GM23248 (cell line): ENCODE measurements at regions of chr1 and their contacts with region 1.

Region 1: DNA sequence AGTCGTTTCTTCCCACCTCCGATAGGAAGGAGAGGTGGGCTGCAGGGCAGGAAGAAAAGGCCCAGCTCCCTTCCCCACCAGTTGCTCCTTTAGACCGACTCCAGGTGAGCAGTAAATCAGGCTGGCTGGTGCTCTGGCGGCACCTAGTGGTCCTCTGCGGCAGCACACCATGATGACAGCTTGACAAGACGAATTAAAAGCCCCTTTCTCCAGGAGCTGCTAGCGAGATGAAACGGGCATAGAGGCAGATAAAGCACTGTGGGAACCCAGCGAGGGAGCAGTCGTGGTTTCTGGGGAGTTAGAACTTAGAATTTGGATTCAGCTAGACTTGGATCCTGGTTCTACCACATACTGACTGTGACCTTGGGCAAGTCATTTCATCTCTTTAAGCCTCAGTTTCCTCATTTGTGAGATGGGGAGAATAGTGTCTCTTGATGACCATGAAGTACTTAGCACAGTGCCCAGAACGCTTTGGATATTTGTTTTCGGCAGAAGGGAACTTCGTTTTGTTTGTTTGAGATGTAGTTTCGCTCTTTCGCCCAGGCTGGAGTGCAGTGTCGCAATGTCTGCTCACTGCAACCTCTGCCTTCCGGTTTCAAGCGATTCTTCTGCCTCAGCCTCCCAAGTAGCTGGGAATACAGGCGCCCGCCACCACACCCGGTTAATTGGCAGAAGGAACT is 21.8 kb upstream of the COL9A2 start:
- DNase-seq: peak; percentile 73
- H3K4me3 ChIP-seq: no peak overlapping the region
- H3K27ac ChIP-seq: no peak overlapping the region
- H3K4me1 ChIP-seq: no peaks in the 10 kb centered on the region
- H3K27me3 ChIP-seq: no peaks in the 10 kb centered on the region

Region 2: GRCh38 chr1:40079774-40080400 is 259.0 kb before region 1 on chr1:
- in situ Hi-C with region 1: loop called (anchors 10 kb)
- DNase-seq: no peak
- H3K4me3 ChIP-seq: no peak overlapping the region
- H3K27ac ChIP-seq: no peak overlapping the region
- H3K4me1 ChIP-seq: peaks cover 27% of the 10 kb centered on the region
- H3K27me3 ChIP-seq: no peaks in the 10 kb centered on the region

Region 3: GRCh38 chr1:40143891-40144575 is 194.9 kb before region 1 on chr1:
- in situ Hi-C with region 1: loop called (anchors 10 kb)
- DNase-seq: peak; percentile 84
- H3K4me3 ChIP-seq: no peak overlapping the region
- H3K27ac ChIP-seq: no peak overlapping the region
- H3K4me1 ChIP-seq: no peaks in the 10 kb centered on the region
- H3K27me3 ChIP-seq: peaks cover 33% of the 10 kb centered on the region

Region 4: GRCh38 chr1:40404670-40405462 is 66.0 kb after region 1 on chr1:
- in situ Hi-C with region 1: no loop called
- DNase-seq: peak; percentile 67
- H3K4me3 ChIP-seq: peak overlapping the region; percentile 36; the same call in 1 of the 2 replicates
- H3K27ac ChIP-seq: no peak overlapping the region
- H3K4me1 ChIP-seq: no peaks in the 10 kb centered on the region
- H3K27me3 ChIP-seq: no peaks in the 10 kb centered on the region